GM12878 (cell line): ENCODE measurements at regions of chr13 and their contacts with region 1.

Region 1: GRCh38 chr13:78137404-78138142 is 218.9 kb upstream of the EDNRB start:
- DNase-seq: peak; percentile 46
- ATAC-seq: peak; percentile 95
- H3K4me3 ChIP-seq: no peak overlapping the region
- H3K27ac ChIP-seq: no peak overlapping the region
- H3K4me1 ChIP-seq: no peaks in the 10 kb centered on the region
- H3K27me3 ChIP-seq: 0 out of 4 replicates have a peak, but pooled peaks cover 0 to under 1% of the 10 kb centered on the region in 2 experiments
- CTCF ChIP-seq: peak; percentile 67 to 74 (median 67)
- EP300 ChIP-seq: no peak
- POLR2A ChIP-seq: no peak
- RAD21 ChIP-seq: peak; percentile 82

Region 2: DNA sequence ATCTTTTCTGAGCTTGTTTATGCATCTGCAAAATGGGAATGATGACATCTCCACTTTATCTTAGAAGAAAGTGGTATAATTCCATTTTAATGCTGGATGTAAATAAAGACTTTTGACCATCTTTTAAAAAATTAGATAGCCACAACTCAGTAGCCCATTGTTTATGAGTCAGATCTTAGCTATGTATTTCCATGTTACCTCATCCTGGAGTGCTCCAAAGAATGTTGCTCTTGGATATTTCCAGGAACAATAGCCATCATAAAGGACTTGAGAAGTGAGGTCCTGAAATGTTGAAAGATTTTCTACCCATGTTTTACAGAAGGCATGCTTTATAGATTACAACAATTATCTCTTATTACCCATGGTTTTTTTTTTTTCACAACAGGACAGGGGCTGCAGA is 10.3 kb after region 1 on chr13:
- CTCF ChIA-PET with region 1: interaction called, 25 read pairs
- POLR2A ChIA-PET with region 1: interaction called, 3 read pairs
- RAD21 ChIA-PET with region 1: interaction called, 7 read pairs
- SMC1A ChIA-PET with region 1: interaction called, 16 read pairs
- in situ Hi-C with region 1: no loop called
- intact Hi-C with region 1: no loop called
- DNase-seq: no peak
- ATAC-seq: no peak
- H3K4me3 ChIP-seq: no peak overlapping the region
- H3K27ac ChIP-seq: no peak overlapping the region
- H3K4me1 ChIP-seq: no peaks in the 10 kb centered on the region
- H3K27me3 ChIP-seq: no peaks in the 10 kb centered on the region
- CTCF ChIP-seq: no peak
- EP300 ChIP-seq: no peak
- POLR2A ChIP-seq: no peak
- RAD21 ChIP-seq: no peak

Region 3: GRCh38 chr13:78201411-78201810 is 63.8 kb after region 1 on chr13:
- CTCF ChIA-PET with region 1: interaction called, 5 read pairs
- POLR2A ChIA-PET with region 1: no interaction called
- RAD21 ChIA-PET with region 1: interaction called, 13 read pairs
- SMC1A ChIA-PET with region 1: interaction called, 17 read pairs
- in situ Hi-C with region 1: no loop called
- intact Hi-C with region 1: no loop called
- DNase-seq: peak; percentile 64
- ATAC-seq: peak; percentile 86
- H3K4me3 ChIP-seq: no peak overlapping the region
- H3K27ac ChIP-seq: no peak overlapping the region
- H3K4me1 ChIP-seq: no peaks in the 10 kb centered on the region
- H3K27me3 ChIP-seq: no peaks in the 10 kb centered on the region
- CTCF ChIP-seq: no peak
- EP300 ChIP-seq: peak in 1 of 2 experiments; percentile 59; a peak in 1 of 4 replicates
- POLR2A ChIP-seq: no peak
- RAD21 ChIP-seq: no peak

Region 4: GRCh38 chr13:78562237-78562889 is 424.8 kb after region 1 on chr13:
- CTCF ChIA-PET with region 1: no interaction called
- POLR2A ChIA-PET with region 1: no interaction called
- RAD21 ChIA-PET with region 1: no interaction called
- SMC1A ChIA-PET with region 1: no interaction called
- in situ Hi-C with region 1: no loop called
- intact Hi-C with region 1: loop called (anchors 10 kb)
- DNase-seq: no peak
- ATAC-seq: peak; percentile 51; the same call in 2 of the 3 replicates
- H3K4me3 ChIP-seq: no peak overlapping the region
- H3K27ac ChIP-seq: no peak overlapping the region
- H3K4me1 ChIP-seq: no peaks in the 10 kb centered on the region
- H3K27me3 ChIP-seq: no peaks in the 10 kb centered on the region
- CTCF ChIP-seq: no peak
- EP300 ChIP-seq: no peak
- POLR2A ChIP-seq: no peak
- RAD21 ChIP-seq: no peak

Region 5: GRCh38 chr13:79056706-79057105 is 919.1 kb after region 1 on chr13:
- CTCF ChIA-PET with region 1: interaction called, 24 read pairs
- POLR2A ChIA-PET with region 1: no interaction called
- RAD21 ChIA-PET with region 1: interaction called, 8 read pairs
- SMC1A ChIA-PET with region 1: interaction called, 10 read pairs
- in situ Hi-C with region 1: no loop called
- intact Hi-C with region 1: loop called (anchors 10 kb)
- DNase-seq: no peak
- ATAC-seq: peak; percentile 71
- H3K4me3 ChIP-seq: no peak overlapping the region
- H3K27ac ChIP-seq: no peak overlapping the region
- H3K4me1 ChIP-seq: no peaks in the 10 kb centered on the region
- H3K27me3 ChIP-seq: no peaks in the 10 kb centered on the region
- CTCF ChIP-seq: peak; percentile 18 to 58 (median 42); a peak in 3 of 6 replicates
- EP300 ChIP-seq: no peak
- POLR2A ChIP-seq: no peak
- RAD21 ChIP-seq: peak; percentile 15; the same call in 1 of the 2 replicates